Heart left ventricle (tissue), 16 donors: ENCODE measurements at regions of chr20 and their contacts with region 1.

Region 1: DNA sequence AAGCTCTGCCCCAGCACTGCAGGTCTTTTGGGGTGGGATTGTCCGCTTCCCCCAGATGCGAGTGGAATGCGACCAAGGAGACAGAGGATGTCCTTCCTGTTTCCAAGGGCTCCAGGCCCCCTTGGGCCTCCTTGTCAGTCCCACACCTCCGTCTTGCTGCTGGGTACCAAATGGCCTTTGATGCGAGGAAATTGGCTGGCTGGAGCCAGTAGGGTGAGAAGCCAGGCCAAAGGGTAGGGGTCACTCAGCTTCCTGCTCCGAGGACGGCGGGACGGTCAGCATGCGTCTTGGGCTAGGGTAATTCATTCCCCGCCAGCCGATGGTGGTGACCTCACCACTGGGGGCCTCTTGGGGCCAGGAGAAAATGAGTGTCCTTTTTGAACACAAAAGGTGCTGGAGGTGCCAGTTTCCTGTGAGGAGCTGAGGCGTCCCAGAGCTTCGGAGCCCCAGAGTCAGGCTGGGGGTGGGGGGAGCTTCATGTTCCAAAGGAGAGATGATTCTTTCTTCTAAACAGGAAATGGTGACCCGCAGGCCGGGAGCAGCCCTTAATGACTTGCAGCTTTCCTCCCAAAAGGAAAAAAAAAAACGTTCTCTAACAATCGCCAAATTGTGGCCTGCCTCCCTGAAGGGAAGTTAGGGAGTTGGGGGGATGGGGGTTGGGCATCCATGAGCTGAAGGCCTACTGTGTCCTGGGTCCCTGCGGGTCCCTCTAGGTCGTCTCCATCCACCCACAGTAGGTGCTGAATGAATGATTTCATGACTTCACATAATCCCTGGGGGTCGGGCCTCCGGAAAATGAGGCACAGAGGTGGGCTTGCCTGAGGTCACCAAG is 6.7 kb downstream of the SNAI1 start:
- DNase-seq: peak; percentile 75 to 83 (median 78)
- ATAC-seq: peak; percentile 55 to 84 (median 64)
- H3K4me3 ChIP-seq: peak overlapping the region in 4 of 12 donors; percentile 1 to 32 (median 4)
- H3K27ac ChIP-seq: peak overlapping the region; percentile 33 to 88 (median 76)
- H3K4me1 ChIP-seq: peaks cover 4 to 82% (median 39%) of the 10 kb centered on the region in 12 donors
- H3K27me3 ChIP-seq: no peaks in the 10 kb centered on the region
- CTCF ChIP-seq: no peak
- POLR2A ChIP-seq: no peak

Region 2: DNA sequence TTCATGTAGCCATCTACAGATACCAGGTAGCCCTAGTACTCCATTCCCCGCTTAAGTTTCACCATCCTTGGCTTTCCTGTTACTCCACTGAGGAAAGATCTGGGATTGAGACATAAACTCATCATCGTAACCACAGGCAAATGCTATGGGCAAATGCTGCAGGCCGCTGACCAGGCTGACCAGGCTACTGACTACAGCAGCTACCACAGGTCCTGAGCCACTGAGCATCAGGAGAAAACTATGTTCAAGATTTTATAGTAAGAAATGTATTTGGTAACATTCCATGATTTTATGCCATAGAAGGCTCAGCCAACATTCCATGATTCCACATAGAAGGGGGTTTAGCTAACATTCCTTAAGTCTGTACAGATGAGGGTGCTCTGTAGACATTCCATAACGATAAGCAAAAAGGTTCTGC is 259.7 kb before region 1 on chr20:
- intact Hi-C with region 1: no loop called
- DNase-seq: no peak
- ATAC-seq: no peak
- H3K4me3 ChIP-seq: no peak overlapping the region
- H3K27ac ChIP-seq: no peak overlapping the region
- H3K4me1 ChIP-seq: peaks cover 0 to 27% (median 0%) of the 10 kb centered on the region in 12 donors
- H3K27me3 ChIP-seq: no peaks in the 10 kb centered on the region
- CTCF ChIP-seq: no peak
- POLR2A ChIP-seq: no peak

Region 3: DNA sequence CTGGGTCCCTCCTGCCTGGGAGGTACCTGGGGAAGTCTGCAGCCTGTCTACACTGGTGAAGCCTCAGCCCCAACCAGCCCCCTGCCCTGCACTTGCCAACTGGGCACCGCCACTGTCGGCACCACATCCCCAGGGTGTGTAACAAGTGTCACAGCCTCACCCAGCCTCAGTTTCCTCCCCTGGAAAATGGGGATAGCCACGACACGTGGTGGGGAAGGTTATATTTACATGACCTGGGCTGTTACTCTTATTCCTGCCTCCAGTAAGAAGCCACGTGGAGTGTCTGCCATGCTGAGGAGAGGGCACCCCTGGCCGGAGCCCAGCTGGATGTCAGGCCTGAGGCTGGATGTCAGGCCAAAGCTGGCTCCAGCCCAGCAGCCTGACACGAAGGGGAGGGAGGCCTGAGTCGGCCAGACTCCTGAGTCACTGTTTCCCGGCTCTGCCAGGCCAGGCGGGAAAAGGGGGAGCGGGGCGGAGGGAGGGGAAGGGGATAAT is 38.2 kb after region 1 on chr20:
- intact Hi-C with region 1: no loop called
- DNase-seq: peak; percentile 72 to 93 (median 87)
- ATAC-seq: peak; percentile 75 to 92 (median 90)
- H3K4me3 ChIP-seq: no peak overlapping the region
- H3K27ac ChIP-seq: peak overlapping the region in 3 of 12 donors; percentile 6 to 52 (median 24)
- H3K4me1 ChIP-seq: peaks cover 0 to 40% (median 20%) of the 10 kb centered on the region in 12 donors
- H3K27me3 ChIP-seq: no peaks in the 10 kb centered on the region
- CTCF ChIP-seq: no peak
- POLR2A ChIP-seq: no peak

Region 4: GRCh38 chr20:50048420-50049166 is 59.1 kb after region 1 on chr20:
- intact Hi-C with region 1: loop called in 1 of 10 experiments (anchors 5 kb)
- DNase-seq: peak in 3 of 5 donors; percentile 26 to 59 (median 33)
- ATAC-seq: peak in 3 of 4 donors; percentile 20 to 57 (median 40)
- H3K4me3 ChIP-seq: no peak overlapping the region
- H3K27ac ChIP-seq: peak overlapping the region in 8 of 12 donors; percentile 31 to 90 (median 82)
- H3K4me1 ChIP-seq: peaks cover 3 to 51% (median 18%) of the 10 kb centered on the region in 12 donors
- H3K27me3 ChIP-seq: no peaks in the 10 kb centered on the region
- CTCF ChIP-seq: no peak
- POLR2A ChIP-seq: no peak